ENCODE measurements at regions of chr15 and their contacts with region 1.

Region 1: DNA sequence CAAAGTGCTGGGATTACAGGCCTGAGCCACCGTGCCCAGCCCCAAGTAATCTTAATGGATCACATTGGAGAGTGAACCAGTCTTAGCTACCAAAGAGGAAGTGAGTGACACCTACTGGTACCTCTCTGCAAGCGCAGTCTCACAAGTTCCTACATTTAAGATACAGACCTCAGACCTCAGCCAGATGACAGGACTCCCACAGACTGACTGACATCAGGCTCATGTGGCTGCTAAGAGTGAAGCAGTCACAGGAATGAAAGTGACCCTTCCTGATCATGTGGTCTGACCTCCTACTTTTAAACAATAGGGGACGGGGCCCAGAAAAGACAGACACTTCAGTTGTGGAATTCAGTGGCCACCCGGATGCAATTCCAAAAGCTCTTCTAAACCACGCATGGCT is 36.3 kb upstream of the GNB5 start:
- DNase-seq: peak; percentile 88
- ATAC-seq: peak; percentile 99
- H3K4me3 Mint-ChIP-seq: no peak overlapping the region
- H3K27ac Mint-ChIP-seq: peak overlapping the region; percentile 57
- H3K4me1 Mint-ChIP-seq: peaks cover 17% of the 10 kb centered on the region
- H3K27me3 Mint-ChIP-seq: no peaks in the 10 kb centered on the region
- CTCF ChIP-seq: peak; percentile 86

Region 2: DNA sequence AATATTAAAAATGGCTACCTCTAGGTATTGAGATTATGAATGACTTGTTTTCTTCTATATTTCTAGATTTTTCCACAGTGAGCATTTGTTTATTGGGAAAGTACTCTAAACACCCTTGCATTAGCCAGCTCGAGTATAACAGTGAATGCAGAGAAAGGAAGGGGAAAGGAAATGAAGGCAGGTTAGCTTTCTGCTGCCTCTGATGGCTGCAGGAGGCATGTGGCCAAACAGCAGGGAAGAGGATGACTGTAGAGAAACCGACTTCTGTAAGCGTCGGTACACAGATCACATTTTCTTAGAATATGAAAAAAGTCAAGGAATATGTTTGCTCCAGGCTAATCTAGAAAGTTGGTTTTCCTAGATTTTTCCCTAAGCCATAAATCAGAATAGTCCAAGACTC is 56.1 kb before region 1 on chr15:
- CTCF ChIA-PET with region 1: interaction called, 43 read pairs
- POLR2A ChIA-PET with region 1: interaction called, 3 read pairs
- intact Hi-C with region 1: loop called (anchors 5 kb)
- DNase-seq: peak; percentile 27
- ATAC-seq: peak; percentile 74
- H3K4me3 Mint-ChIP-seq: peak overlapping the region; percentile 45
- H3K27ac Mint-ChIP-seq: peak overlapping the region; percentile 75
- H3K4me1 Mint-ChIP-seq: peaks cover 31% of the 10 kb centered on the region
- H3K27me3 Mint-ChIP-seq: no peaks in the 10 kb centered on the region
- CTCF ChIP-seq: no peak

Region 3: DNA sequence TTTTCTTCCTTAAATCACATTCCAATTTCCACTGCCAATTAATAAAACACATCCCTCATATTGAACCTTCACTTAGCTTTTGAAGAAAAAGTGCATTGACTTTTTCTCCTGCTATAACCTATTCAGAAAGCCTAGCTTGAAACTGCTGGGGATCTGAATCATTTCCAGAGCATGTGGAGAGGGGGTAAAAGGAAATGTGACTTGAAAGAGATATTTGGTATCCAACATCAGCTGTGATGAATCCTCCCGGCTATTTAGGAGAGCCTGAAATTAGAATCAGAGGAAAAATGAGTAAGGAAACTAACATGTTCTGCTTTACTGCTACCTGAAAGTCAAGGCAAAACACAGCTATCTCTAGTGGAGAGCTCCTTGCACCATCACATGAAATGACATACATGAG is 33.7 kb before region 1 on chr15:
- CTCF ChIA-PET with region 1: interaction called, 11 read pairs
- POLR2A ChIA-PET with region 1: no interaction called
- intact Hi-C with region 1: no loop called
- DNase-seq: no peak
- ATAC-seq: no peak
- H3K4me3 Mint-ChIP-seq: no peak overlapping the region
- H3K27ac Mint-ChIP-seq: no peak overlapping the region
- H3K4me1 Mint-ChIP-seq: no peaks in the 10 kb centered on the region
- H3K27me3 Mint-ChIP-seq: no peaks in the 10 kb centered on the region
- CTCF ChIP-seq: no peak

Region 4: DNA sequence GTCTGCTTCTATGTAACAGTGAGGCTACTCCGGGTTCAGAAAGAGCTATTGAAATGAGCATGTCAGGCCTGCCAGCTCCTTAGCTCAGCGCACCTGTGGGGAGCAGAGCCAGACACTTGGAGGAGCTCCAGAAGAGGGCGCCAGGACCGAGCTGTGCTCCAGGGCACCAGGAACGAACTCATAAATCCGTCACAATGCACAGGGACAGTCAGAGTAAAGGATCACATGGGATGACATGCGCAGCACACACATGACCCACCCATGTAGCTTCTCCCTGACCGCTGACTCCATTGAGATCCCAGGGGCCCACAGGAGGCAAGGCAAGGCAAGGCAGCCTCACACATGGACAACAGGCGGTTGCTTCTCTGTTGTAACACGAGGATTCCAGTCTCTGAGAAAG is 10.3 kb before region 1 on chr15:
- CTCF ChIA-PET with region 1: interaction called, 54 read pairs
- POLR2A ChIA-PET with region 1: interaction called, 3 read pairs
- intact Hi-C with region 1: no loop called
- DNase-seq: peak; percentile 37
- ATAC-seq: no peak
- H3K4me3 Mint-ChIP-seq: no peak overlapping the region
- H3K27ac Mint-ChIP-seq: no peak overlapping the region
- H3K4me1 Mint-ChIP-seq: peaks cover 14% of the 10 kb centered on the region
- H3K27me3 Mint-ChIP-seq: no peaks in the 10 kb centered on the region
- CTCF ChIP-seq: no peak